BJ (cell line): ENCODE measurements at regions of chr19 and their contacts with region 1.

Region 1: DNA sequence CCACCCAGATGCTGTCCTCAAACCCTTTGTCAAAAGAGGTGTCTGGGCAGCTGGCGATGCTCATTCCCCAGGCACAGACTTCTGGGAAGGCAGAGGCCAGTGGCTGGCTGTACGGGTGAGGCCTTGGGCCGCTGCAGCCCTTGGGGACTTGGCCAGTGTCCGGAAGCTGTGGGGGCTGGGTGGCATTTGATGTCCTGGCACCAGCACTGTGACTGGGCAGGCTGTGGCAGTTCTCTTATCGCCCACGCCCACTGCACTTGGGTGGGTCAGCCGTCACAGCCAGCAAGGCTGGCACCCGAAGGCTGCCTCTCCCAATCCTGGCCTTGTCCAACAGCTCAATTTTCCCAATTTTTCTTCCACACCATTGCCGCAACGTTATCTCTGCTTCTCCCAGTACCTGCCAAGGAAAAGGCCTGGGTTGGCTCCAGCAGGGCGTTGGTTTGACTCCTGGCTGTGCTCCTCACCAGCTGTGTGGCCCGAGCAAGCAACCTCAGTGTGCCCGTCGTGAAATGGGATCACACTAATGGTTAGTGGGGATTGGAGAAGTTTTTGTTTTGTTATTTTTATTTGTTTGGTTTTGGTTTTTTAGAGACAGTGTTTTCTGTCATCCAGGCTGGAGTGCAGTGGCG is 12.7 kb upstream of the SLC44A2 start:
- DNase-seq: no peak
- H3K4me3 ChIP-seq: no peak overlapping the region
- H3K27me3 ChIP-seq: no peaks in the 10 kb centered on the region
- CTCF ChIP-seq: no peak

Region 2: DNA sequence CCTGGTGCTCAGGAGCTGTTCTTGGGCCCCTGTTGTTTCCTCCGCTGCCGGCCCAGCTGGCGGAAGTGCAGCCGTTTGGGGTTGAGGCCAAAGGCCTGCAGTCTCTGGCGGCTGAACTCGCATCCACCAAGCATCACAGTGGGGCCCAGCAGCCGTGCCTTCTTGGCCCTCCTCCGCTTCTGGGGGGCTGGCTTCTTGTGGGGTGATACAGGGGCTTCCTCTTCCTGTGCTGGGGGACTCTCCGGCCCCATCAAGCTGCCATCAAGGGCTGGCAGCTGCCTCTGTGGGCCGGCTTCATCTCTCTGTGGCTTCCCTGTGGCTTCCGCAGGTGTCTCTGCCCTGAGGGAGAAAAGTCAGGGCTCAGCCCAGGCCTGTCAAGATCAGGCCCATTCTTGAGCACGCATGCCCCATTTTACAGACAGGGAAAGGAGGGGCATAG is 58.6 kb before region 1 on chr19:
- CTCF ChIA-PET with region 1: no interaction called
- POLR2A ChIA-PET with region 1: no interaction called
- DNase-seq: no peak
- H3K4me3 ChIP-seq: no peak overlapping the region
- H3K27me3 ChIP-seq: no peaks in the 10 kb centered on the region
- CTCF ChIP-seq: no peak

Region 3: DNA sequence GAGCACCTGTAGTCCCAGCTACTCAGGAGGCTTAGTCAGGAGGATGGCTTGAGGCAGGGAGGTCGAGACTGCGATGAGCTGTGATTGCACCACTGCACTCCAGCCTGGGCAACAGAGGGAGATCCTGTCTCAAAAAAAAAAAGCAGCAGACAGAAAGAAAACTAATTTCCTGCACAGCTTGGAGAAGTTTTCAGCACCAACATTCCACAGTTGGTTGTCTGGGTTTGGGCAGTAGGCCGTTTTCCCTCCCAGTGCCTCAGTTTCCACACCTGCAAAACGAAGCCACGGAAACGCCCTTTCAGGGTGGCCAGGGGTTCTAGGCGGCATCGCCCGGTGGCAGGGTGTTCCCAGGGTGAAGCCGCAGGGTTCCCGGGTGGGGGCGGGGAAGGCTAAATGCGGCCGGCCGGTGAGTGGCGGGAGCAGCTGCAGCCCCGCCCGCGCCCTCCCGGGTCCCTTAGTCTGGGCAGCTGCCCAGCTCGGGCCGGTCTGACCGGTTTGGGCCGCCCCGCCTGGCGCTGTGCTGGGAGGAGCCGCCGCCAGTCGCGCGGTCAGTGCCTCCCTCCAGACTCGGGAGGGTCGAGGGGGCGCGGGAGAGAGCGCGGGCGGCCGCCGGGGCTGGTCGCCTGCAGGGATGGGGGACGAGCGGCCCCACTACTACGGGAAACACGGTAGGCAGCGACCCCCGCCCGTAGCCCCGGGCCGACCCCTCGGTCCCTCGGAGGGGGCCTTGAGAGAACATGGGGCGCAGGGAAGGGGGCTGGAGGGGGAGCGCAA is 12.6 kb after region 1 on chr19 and contains the start of gene SLC44A2:
- CTCF ChIA-PET with region 1: no interaction called
- POLR2A ChIA-PET with region 1: interaction called, 17 read pairs
- DNase-seq: no peak
- H3K4me3 ChIP-seq: peak within 1 kb of the TSS; percentile 65
- H3K27me3 ChIP-seq: no peaks in the 10 kb centered on the region
- CTCF ChIP-seq: no peak
- polyA plus RNA-seq, gene SLC44A2: 78.0 and 114 TPM in 2 replicates